Thyroid gland (tissue), 4 donors: ENCODE measurements at regions of chr9 and their contacts with region 1.

Region 1: DNA sequence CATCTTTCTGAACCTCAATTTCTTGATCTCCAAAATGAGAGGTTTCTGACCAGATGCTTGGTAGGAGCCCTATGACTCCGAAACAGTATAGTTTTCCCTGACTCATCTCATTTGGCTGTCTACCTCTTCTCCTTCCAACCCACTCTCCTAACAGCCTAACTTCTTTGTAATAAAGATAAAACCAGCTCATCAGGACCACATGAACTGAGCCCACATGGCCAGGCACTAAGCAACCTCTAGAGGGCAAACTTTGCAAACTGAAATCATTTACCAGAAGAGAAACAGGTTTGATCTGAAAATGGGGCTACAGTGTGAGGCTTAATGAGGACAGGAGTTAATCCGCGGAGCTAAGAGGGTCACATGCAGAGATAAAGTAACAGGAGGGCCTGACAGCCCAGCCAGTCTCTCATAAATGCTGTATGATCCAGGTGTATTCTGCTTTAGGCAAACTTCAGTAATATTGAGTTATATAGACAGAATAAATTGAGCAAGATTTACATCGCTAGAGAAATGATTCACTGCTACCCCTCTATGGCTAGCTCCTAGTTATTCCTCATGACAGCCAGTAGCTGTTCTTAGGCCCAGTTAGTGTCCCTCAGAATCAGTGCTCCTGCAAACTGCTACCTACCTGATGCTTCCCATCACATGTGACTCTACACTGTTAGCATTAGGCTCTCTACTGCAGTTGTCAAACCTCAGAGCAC is 64.6 kb downstream of the ABCA1 start:
- DNase-seq: peak; percentile 53 to 60
- H3K4me3 ChIP-seq: no peak overlapping the region
- H3K27ac ChIP-seq: peak overlapping the region in 1 of 3 donors; percentile 0
- H3K4me1 ChIP-seq: peaks cover 21 to 44% of the 10 kb centered on the region in 2 donors
- H3K27me3 ChIP-seq: no peaks in the 10 kb centered on the region
- CTCF ChIP-seq: peak; percentile 53 to 80 (median 70)
- POLR2A ChIP-seq: no peak

Region 2: DNA sequence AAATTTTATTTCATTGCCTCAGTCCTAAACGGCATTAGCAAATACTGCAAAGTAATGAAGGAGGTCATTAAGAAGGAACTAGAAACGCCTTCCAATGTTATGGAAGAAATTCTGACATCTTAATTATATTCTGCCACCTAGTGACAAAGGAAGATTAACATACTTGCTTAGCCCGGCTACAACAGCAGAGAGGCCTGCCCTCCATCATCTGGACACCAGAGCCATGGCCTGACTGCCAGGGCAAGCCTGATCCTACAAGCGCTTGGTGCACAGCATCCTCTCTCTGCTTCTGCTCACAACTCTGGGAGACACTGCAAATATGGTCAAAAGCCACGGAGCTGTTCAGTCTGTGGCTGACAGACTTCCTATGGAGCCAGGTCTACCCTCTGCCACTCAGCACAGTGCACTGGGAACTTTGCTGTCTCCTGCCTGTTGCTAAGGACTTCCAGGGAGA is 293.8 kb after region 1 on chr9:
- intact Hi-C with region 1: loop called (anchors 10 kb)
- DNase-seq: peak; percentile 18 to 41
- H3K4me3 ChIP-seq: no peak overlapping the region
- H3K27ac ChIP-seq: no peak overlapping the region
- H3K4me1 ChIP-seq: no peaks in the 10 kb centered on the region
- H3K27me3 ChIP-seq: no peaks in the 10 kb centered on the region
- CTCF ChIP-seq: peak in 4 of 6 experiments; percentile 45 to 62 (median 53)
- POLR2A ChIP-seq: no peak